ENCODE measurements at regions of chr14 and their contacts with region 1.

Region 1: DNA sequence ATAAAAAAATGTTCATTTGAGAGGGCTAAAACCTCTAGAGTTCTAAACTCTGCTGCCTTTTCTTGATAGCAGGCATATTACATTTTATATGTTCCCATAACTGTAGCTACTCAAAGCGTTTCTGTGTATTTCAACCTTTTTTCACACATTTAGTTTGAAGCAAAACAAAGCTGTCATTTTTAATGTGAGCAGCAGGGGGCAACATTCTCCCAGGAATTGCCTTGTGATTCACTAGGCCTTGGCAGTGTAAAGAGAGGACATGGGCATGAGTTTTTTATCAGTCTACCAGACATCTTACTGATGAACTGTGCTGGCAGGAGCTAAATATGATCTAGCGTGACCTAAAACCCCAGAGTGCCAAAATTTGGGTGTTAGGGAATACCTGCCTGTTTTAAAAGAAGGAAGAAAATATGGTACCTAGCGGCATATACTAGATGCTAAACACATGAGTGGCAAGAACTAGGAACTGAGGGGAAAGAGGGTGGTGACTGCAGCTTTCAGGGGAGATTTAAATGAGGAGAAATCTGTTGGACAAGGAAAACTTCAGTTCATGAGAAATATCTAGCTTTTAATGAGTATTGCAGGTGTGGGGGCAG is 65.3 kb downstream of the IFT43 start:
- DNase-seq: peak in 1 of 3 donors; percentile 48
- ATAC-seq: peak; percentile 68 to 82 (median 74)
- H3K4me3 ChIP-seq: no peak overlapping the region
- H3K27ac ChIP-seq: no peak overlapping the region
- H3K4me1 ChIP-seq: no peaks in the 10 kb centered on the region
- H3K27me3 ChIP-seq: no peaks in the 10 kb centered on the region
- CTCF ChIP-seq: peak; percentile 72 to 87 (median 76)
- POLR2A ChIP-seq: no peak

Region 2: GRCh38 chr14:76352639-76353281 is 301.9 kb after region 1 on chr14:
- intact Hi-C with region 1: loop called (anchors 10 kb)
- DNase-seq: peak in 2 of 3 donors; percentile 57 to 63
- ATAC-seq: peak; percentile 82 to 88 (median 87)
- H3K4me3 ChIP-seq: peak overlapping the region in 2 of 3 donors; percentile 28 to 36
- H3K27ac ChIP-seq: no peak overlapping the region
- H3K4me1 ChIP-seq: peaks cover 0 to 7% (median 0%) of the 10 kb centered on the region in 4 donors
- H3K27me3 ChIP-seq: no peaks in the 10 kb centered on the region
- CTCF ChIP-seq: peak; percentile 73 to 88 (median 85)
- POLR2A ChIP-seq: no peak

Region 3: GRCh38 chr14:76391981-76392690 is 341.2 kb after region 1 on chr14:
- intact Hi-C with region 1: loop called in 1 of 2 experiments (anchors 10 kb)
- DNase-seq: no peak
- ATAC-seq: no peak
- H3K4me3 ChIP-seq: no peak overlapping the region
- H3K27ac ChIP-seq: no peak overlapping the region
- H3K4me1 ChIP-seq: no peaks in the 10 kb centered on the region
- H3K27me3 ChIP-seq: no peaks in the 10 kb centered on the region
- CTCF ChIP-seq: no peak
- POLR2A ChIP-seq: no peak

Measured in right lobe of liver (tissue), 6 donors.